ENCODE measurements at regions of chr17 and their contacts with region 1.

Region 1: GRCh38 chr17:63919311-63919723 is 678 bp upstream of the GH1 start:
- H3K4me3 ChIP-seq: no peak overlapping the region
- H3K27ac ChIP-seq: no peak overlapping the region
- H3K4me1 ChIP-seq: no peaks in the 10 kb centered on the region
- CTCF ChIP-seq: peak; percentile 38; the same call in 1 of the 2 replicates

Region 2: DNA sequence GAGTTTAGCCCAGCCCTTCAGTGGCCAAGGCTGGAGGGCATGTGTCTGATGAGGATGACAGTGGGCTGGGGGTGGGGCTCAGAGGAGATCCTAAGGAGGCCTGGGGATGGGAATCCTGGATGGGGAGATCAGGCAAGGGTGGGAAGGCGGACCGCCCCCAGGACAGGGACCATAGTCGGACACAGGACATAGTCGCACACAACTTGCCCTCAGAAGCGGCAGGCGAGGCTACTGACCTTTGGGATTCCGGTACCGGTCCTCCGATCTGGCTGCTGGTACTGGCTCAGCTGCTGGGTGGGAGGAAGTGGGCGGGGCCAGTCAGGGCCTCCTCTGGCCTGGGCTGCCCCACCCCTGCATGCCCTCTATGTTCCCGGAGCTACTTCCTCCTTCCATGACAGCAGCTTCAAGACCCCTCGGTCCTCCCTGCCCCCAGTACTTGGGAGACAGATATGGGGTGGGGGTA is 11.8 kb after region 1 on chr17:
- CTCF ChIA-PET with region 1: interaction called, 17 read pairs
- POLR2A ChIA-PET with region 1: no interaction called
- H3K4me3 ChIP-seq: no peak overlapping the region
- H3K27ac ChIP-seq: no peak overlapping the region
- H3K4me1 ChIP-seq: no peaks in the 10 kb centered on the region
- CTCF ChIP-seq: no peak

Region 3: GRCh38 chr17:64281962-64282727 is 362.8 kb after region 1 on chr17:
- CTCF ChIA-PET with region 1: interaction called, 16 read pairs
- POLR2A ChIA-PET with region 1: no interaction called
- H3K4me3 ChIP-seq: no peak overlapping the region
- H3K27ac ChIP-seq: no peak overlapping the region
- H3K4me1 ChIP-seq: no peaks in the 10 kb centered on the region
- CTCF ChIP-seq: peak; percentile 48; the same call in 1 of the 2 replicates

Measured in HEK293 (cell line).